Ascending aorta (tissue), 2 donors: ENCODE measurements at regions of chr18 and their contacts with region 1.

Region 1: GRCh38 chr18:44655435-44655834 is 25.3 kb upstream of the SETBP1 start:
- DNase-seq: no peak
- H3K4me3 ChIP-seq: no peak overlapping the region
- H3K27ac ChIP-seq: no peak overlapping the region
- H3K4me1 ChIP-seq: peaks cover 0 to 7% of the 10 kb centered on the region in 2 donors
- H3K27me3 ChIP-seq: no peaks in the 10 kb centered on the region
- CTCF ChIP-seq: no peak

Region 2: DNA sequence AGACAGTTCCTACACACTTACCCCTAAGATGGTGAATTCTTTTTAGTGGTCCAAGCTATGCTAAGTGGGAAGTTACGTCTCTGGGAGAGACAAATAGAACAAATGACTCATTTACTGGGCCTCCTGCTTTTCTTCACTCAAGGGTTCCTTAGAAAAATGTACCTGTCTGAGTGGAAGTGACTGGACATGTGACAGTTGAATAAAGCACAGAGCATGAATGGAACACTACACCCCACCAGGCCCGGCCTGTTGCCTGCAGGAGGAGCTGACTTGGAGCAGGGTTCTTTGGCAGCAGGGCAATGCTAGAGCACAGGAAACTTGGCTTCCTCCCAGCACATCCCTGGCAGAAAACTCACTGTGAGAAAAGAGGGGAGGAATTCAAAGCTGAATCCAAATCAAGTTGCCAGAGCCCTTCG is 425.7 kb before region 1 on chr18:
- intact Hi-C with region 1: loop called (anchors 5 kb)
- DNase-seq: peak in 1 of 2 donors; percentile 66
- H3K4me3 ChIP-seq: no peak overlapping the region
- H3K27ac ChIP-seq: no peak overlapping the region
- H3K4me1 ChIP-seq: peaks cover 0 to 7% of the 10 kb centered on the region in 2 donors
- H3K27me3 ChIP-seq: no peaks in the 10 kb centered on the region
- CTCF ChIP-seq: no peak